Mucosa of descending colon (tissue), 3 donors: ENCODE measurements at regions of chr3 and their contacts with region 1.

Region 1: DNA sequence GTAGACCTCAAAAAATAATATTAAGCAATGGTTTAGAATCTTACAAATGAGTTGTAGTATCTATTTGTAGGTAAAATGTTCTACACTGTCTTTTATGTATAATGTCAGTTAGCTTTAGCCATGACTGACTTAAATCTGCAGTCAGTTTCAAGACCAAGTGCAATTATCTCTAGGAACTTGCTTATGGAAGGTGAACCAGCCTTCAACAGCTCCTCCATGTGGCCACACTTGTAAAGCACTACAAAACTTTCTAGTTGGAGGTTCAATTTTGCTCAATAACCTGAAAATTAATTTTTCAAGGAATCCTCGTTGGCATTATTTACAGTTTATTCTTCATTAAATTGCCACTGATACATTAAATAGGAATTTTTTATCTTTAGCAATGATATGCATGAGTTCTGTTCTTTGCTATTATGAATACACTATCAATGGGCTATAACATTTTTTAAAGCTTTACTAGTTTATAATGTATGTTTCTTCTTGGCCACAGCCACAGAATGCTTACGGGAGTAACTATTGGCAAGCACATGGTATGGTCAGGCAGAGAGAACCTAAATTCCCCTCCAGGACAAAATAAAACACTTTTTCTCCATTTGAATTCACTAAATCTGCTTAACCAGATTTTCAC is 315.3 kb upstream of the UBE2E2 start:
- DNase-seq: peak in 1 of 3 donors; percentile 52
- ATAC-seq: peak; percentile 53
- H3K4me3 ChIP-seq: no peak overlapping the region
- H3K4me1 ChIP-seq: no peaks in the 10 kb centered on the region
- CTCF ChIP-seq: peak; percentile 15

Region 2: GRCh38 chr3:22555753-22556435 is 331.9 kb before region 1 on chr3:
- intact Hi-C with region 1: loop called (anchors 5 to 10 kb)
- DNase-seq: no peak
- ATAC-seq: no peak
- H3K4me3 ChIP-seq: no peak overlapping the region
- H3K4me1 ChIP-seq: no peaks in the 10 kb centered on the region
- CTCF ChIP-seq: no peak

Region 3: GRCh38 chr3:22565393-22565792 is 322.4 kb before region 1 on chr3:
- intact Hi-C with region 1: loop called (anchors 5 to 10 kb)
- DNase-seq: no peak
- ATAC-seq: no peak
- H3K4me3 ChIP-seq: no peak overlapping the region
- H3K4me1 ChIP-seq: no peaks in the 10 kb centered on the region
- CTCF ChIP-seq: no peak

Region 4: DNA sequence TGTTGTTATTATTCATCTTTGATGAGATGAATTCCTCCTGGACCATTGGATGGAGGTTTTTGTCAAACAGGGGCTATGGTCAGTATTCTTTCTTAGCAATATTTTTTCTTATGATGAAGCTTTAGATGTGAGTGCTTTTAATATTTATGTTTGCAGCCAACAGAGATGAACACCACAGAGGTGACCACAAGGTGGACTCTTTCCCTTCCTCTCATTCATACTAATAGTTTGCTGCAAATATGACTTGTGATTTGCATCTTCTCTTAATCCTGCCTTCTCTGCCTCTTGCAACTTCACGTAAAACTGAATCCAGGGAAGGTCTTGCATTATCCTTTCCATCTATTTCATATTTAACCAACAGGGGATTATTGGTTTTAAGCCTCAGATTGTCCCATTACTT is 157.8 kb before region 1 on chr3:
- intact Hi-C with region 1: loop called in 1 of 2 experiments (anchors 10 kb)
- DNase-seq: peak in 1 of 3 donors; percentile 28
- ATAC-seq: peak; percentile 34
- H3K4me3 ChIP-seq: no peak overlapping the region
- H3K4me1 ChIP-seq: peaks cover 7% of the 10 kb centered on the region
- CTCF ChIP-seq: no peak